GM23248 (cell line): ENCODE measurements at regions of chr11 and their contacts with region 1.

Region 1: GRCh38 chr11:98194611-98195010 is 826.1 kb upstream of the CNTN5 start:
- DNase-seq: no peak
- H3K4me3 ChIP-seq: no peak overlapping the region
- H3K27ac ChIP-seq: no peak overlapping the region
- H3K4me1 ChIP-seq: no peaks in the 10 kb centered on the region
- H3K27me3 ChIP-seq: no peaks in the 10 kb centered on the region

Region 2: GRCh38 chr11:97332271-97332670 is 862.3 kb before region 1 on chr11:
- in situ Hi-C with region 1: no loop called
- DNase-seq: no peak
- H3K4me3 ChIP-seq: no peak overlapping the region
- H3K27ac ChIP-seq: no peak overlapping the region
- H3K4me1 ChIP-seq: no peaks in the 10 kb centered on the region
- H3K27me3 ChIP-seq: no peaks in the 10 kb centered on the region

Region 3: DNA sequence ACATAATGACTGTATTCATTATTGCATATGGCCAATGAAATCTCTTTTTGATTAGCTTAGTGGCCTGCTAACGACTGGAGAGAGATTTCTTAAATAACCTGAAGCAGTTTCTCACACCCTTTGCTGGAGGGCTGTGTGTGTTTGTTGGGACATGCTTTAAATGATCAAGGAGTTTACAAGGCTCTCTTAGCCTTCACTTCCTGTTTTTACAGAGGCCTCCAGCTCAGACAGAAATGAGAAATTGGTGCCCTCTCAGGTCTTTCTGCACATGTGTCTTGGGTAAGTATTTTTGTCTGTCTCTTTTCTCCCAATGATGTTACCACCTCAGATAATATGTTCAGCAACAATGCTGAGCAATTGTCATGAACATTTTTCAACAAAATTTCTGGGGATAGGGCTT is 58.3 kb before region 1 on chr11:
- in situ Hi-C with region 1: loop called (anchors 10 kb)
- DNase-seq: no peak
- H3K4me3 ChIP-seq: no peak overlapping the region
- H3K27ac ChIP-seq: no peak overlapping the region
- H3K4me1 ChIP-seq: no peaks in the 10 kb centered on the region
- H3K27me3 ChIP-seq: no peaks in the 10 kb centered on the region

Region 4: DNA sequence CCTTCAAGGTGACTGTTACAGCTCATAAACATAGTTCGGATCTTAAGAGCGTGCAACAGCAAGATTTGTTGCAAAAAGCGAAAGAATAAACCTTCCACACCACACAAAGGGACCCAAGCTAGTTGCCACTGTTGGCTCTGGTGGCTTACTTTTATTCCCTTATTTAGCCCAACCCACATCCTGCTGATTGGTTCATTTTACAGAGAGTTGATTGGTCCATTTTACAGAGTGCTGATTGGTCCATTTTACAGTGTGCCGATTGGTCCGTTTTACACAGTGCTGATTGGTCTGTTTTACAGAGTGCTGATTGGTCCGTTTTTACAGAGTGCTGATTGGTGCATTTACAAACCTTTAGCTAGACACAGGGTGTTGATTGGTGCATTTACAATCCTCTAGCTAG is 49.3 kb after region 1 on chr11:
- in situ Hi-C with region 1: no loop called
- DNase-seq: no peak
- H3K4me3 ChIP-seq: no peak overlapping the region
- H3K27ac ChIP-seq: no peak overlapping the region
- H3K4me1 ChIP-seq: no peaks in the 10 kb centered on the region
- H3K27me3 ChIP-seq: no peaks in the 10 kb centered on the region